Activated T-helper 1 cell treated with anti-CD3 and anti-CD28 coated beads, Interleukin-12 subunit alpha, Interleukin-12 subunit beta, Interleukin-2, Interleukin-4 antibody, amounts not matched to agents 30 ng/mL and 10 ng/mL and 1 ng/mL, durations not matched to agents 14 hours and 24 hours and 36 hours (primary cell): ENCODE measurements at regions of chr2 and their contacts with region 1.

Region 1: DNA sequence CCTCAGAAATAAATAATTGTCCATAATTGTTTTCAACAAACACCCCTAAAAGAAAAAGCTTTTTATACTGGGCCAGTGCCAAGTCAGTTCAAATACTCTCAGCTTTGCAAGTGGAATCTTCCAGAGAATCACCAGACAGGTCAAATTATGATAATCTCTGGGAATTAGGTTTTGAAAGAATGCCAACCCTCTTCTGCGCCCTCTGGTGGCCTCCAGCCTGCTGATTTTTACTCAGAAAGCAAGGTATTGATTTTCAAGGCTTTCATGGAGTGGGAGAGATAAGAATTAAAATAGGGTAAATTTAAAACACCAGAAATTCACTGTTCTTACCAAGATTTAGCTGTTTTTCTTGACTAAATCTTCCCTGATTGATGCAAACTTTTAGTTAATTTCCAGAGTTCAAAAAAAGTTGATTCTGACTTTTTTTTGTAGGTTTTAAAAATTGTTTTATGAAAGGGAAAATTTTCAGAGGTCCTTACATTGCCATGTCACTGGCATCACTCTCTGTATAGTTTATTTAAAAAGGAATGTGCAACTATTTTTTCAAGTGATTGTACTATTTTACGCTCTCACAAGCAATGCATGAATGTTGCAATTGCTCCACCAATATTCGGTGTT is 282.9 kb upstream of the TNP1 start:
- DNase-seq: no peak
- H3K4me3 Mint-ChIP-seq: no peak overlapping the region
- H3K27ac Mint-ChIP-seq: no peak overlapping the region
- H3K4me1 Mint-ChIP-seq: no peaks in the 10 kb centered on the region
- H3K27me3 Mint-ChIP-seq: peaks cover 5% of the 10 kb centered on the region

Region 2: DNA sequence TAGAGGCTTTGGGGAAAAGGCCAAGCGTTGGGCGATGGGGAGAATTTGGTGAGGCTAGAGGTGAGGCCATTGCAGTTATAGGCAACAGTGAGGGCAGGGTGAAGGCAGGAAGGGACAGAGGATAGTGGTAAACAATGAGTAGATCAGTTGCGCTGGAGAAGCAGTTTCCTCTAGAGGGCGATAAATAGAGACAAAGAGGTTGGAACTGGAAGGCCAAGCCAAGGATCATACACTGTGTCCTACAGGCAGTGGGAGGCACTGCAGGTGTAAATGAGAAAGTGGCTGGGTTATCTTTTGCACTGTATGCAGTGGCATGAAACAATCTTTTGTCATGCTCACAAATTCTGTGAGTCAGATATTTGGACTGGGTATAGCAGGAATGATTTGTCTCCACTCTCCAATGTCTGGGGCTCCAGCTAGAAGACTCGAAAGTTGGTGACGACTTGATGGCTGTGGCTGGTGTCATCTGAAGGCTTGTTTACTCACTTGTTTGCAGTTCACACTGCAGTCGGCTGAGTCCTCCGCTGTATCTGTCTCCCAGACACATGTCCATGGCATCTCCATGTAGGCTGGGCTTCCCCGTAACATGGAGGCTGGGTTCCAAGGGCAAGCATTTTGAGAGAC is 365.0 kb before region 1 on chr2:
- intact Hi-C with region 1: loop called (anchors 1 kb)
- DNase-seq: peak; percentile 36
- H3K4me3 Mint-ChIP-seq: no peak overlapping the region
- H3K27ac Mint-ChIP-seq: no peak overlapping the region
- H3K4me1 Mint-ChIP-seq: peaks cover 4% of the 10 kb centered on the region
- H3K27me3 Mint-ChIP-seq: peaks cover 13% of the 10 kb centered on the region